HepG2 (cell line): ENCODE measurements at regions of chr9 and their contacts with region 1.

Region 1: GRCh38 chr9:87336914-87337333 is 160.7 kb upstream of the DAPK1 start:
- DNase-seq: peak; percentile 75
- ATAC-seq: peak; percentile 87
- H3K4me3 ChIP-seq: peak overlapping the region in 1 of 3 experiments; percentile 45; a peak in 2 of 6 replicates
- H3K27ac ChIP-seq: no peak overlapping the region
- H3K4me1 ChIP-seq: peaks cover 9% of the 10 kb centered on the region
- H3K27me3 ChIP-seq: peaks cover 0 to 18% of the 10 kb centered on the region in 2 experiments; a peak in 3 of 5 replicates
- CTCF ChIP-seq: peak; percentile 72
- EP300 ChIP-seq: no peak
- POLR2A ChIP-seq: no peak
- RAD21 ChIP-seq: peak; percentile 60

Region 2: GRCh38 chr9:87662808-87663528 is 326.0 kb after region 1 on chr9:
- CTCF ChIA-PET with region 1: interaction called, 41 read pairs
- POLR2A ChIA-PET with region 1: no interaction called
- in situ Hi-C with region 1: loop called (anchors 5 kb)
- intact Hi-C with region 1: loop called (anchors 1 kb)
- DNase-seq: peak; percentile 41
- ATAC-seq: peak; percentile 88
- H3K4me3 ChIP-seq: no peak overlapping the region
- H3K27ac ChIP-seq: no peak overlapping the region
- H3K4me1 ChIP-seq: no peaks in the 10 kb centered on the region
- H3K27me3 ChIP-seq: no peaks in the 10 kb centered on the region
- CTCF ChIP-seq: peak; percentile 95
- EP300 ChIP-seq: no peak
- POLR2A ChIP-seq: no peak
- RAD21 ChIP-seq: peak; percentile 86